GM13976 (cell line): ENCODE measurements at regions of chrX and their contacts with region 1.

Region 1: GRCh38 chrX:14095702-14096101 is 66.0 kb upstream of the GEMIN8 start:
- DNase-seq: peak; percentile 31
- CTCF ChIP-seq: peak; percentile 55

Region 2: DNA sequence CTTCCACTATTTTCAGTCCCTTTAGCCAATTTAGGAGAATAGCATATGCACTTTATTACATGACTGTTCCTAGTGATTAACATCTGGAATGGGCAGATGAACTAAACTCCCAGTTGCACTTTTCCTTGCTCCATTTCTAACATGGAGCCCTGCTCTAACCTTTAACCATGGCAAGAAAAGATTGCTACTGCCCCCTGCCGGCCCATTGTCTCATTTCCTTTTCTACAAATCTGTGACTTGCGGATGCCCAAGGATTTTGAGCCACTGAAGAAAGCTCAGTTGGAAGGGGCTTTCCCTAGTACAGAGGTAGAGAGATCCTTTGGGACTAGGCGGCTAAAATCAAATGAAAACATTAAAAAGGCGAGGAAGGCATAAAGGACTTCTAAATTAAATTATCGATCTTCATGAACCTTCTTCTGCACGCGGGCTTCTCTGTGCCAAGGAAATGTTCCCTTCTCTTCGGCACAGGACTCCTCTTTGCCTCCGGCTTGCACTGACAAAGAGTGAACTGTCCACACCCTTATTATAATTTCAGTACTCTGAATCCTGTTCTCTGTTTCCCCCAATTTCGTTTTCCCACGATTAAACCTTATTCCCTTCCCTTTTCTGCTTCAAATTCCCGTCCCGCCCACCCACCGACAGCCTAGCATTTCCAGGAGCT is 433.1 kb after region 1 on chrX:
- in situ Hi-C with region 1: loop called (anchors 25 kb)
- DNase-seq: peak; percentile 5
- CTCF ChIP-seq: peak; percentile 43

Region 3: DNA sequence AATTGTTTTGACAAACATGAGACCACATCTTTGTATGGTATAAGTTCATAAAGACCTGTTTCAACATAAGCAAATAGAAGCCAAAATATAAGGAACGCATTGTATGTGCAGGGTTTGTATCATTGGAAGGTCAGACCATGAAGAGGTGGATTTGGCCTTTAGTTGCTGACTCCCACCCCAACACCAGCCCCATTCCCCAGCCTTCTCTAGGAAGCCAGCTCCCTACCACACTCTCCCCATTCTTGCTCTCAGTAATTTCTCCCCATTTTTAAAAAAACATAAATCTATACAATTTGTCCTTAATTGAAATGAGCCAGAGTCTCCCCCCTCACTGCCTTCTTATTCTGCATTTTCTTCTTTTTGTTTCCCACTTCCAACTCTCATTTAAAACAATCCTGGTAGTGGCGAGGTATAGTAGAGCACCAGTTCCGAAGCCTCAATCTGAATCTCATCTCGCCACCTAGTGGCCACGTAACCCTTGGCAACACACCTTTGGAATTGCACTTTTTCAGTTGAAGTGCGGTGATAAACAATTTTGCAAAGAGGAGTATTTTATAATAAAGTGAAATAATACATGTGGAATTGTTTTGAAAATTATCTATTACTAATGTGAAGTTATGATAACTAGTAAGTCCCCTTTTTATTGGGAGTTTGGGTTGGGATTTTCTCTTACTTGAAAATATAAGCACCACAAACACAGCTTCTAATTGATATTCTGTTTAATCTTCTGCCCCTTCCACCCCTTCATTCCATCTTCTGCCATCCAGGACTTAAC is 1047.5 kb after region 1 on chrX:
- in situ Hi-C with region 1: loop called (anchors 25 kb)
- DNase-seq: peak; percentile 37
- CTCF ChIP-seq: peak; percentile 69

Region 4: DNA sequence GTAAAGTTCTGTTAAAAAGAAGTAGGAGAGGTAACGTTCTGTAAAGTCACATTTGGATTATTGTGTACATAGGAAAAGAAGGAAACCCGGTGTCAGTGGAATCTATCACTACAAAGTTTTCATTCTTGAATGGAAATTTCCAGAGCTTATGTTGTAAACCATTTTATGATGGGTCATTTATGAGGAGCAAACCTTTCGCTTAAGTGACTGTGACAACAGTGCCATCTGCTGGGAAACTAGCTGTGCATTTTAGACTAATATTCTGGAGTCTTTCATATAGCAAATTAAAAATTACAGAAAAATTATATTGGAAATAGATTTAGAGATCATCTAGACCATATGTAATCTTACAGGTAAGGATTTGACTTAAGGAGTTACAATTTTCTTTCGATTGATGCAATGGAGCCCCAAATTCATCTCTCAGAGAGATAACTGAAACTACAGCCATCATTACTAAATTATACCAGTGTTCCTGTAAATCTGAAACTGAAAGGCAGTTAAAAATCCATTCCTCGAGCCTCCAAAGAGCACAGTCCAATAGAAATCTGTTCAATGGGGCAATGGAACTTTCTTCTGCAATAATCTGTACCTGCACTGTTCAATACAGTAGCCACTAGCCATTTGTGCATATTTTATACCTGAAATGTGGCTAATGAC is 1147.3 kb after region 1 on chrX:
- in situ Hi-C with region 1: loop called (anchors 25 kb)
- DNase-seq: peak; percentile 46
- CTCF ChIP-seq: peak; percentile 27